GM12878 (cell line): ENCODE measurements at regions of chr16 and their contacts with region 1.

Region 1: GRCh38 chr16:70402916-70403659 is 35.8 kb downstream of the ST3GAL2 start:
- DNase-seq: no peak
- ATAC-seq: no peak
- H3K4me3 ChIP-seq: no peak overlapping the region
- H3K27ac ChIP-seq: peak overlapping the region; percentile 84
- H3K4me1 ChIP-seq: peaks cover 43% of the 10 kb centered on the region
- H3K27me3 ChIP-seq: no peaks in the 10 kb centered on the region; a peak in 1 of 4 replicates
- CTCF ChIP-seq: no peak
- EP300 ChIP-seq: no peak
- POLR2A ChIP-seq: no peak
- RAD21 ChIP-seq: no peak

Region 2: GRCh38 chr16:70416748-70417616 is 13.9 kb after region 1 on chr16:
- CTCF ChIA-PET with region 1: interaction called, 8 read pairs
- POLR2A ChIA-PET with region 1: interaction called, 18 read pairs
- RAD21 ChIA-PET with region 1: interaction called, 23 read pairs
- SMC1A ChIA-PET with region 1: interaction called, 39 read pairs
- in situ Hi-C with region 1: no loop called
- intact Hi-C with region 1: no loop called
- DNase-seq: no peak
- ATAC-seq: peak; percentile 95
- H3K4me3 ChIP-seq: no peak overlapping the region
- H3K27ac ChIP-seq: peak overlapping the region; percentile 87
- H3K4me1 ChIP-seq: peaks cover 50% of the 10 kb centered on the region
- H3K27me3 ChIP-seq: no peaks in the 10 kb centered on the region
- CTCF ChIP-seq: no peak
- EP300 ChIP-seq: peak; percentile 60 to 69; a peak in 2 of 4 replicates
- POLR2A ChIP-seq: 0 out of 2 replicates have a peak, but pooled peaks have one; percentile 20
- RAD21 ChIP-seq: no peak

Region 3: GRCh38 chr16:70433458-70434103 is 30.5 kb after region 1 on chr16:
- CTCF ChIA-PET with region 1: interaction called, 10 read pairs
- POLR2A ChIA-PET with region 1: interaction called, 47 read pairs
- RAD21 ChIA-PET with region 1: interaction called, 38 read pairs
- SMC1A ChIA-PET with region 1: interaction called, 37 read pairs
- in situ Hi-C with region 1: no loop called
- intact Hi-C with region 1: loop called (anchors 1 kb)
- DNase-seq: no peak
- ATAC-seq: no peak
- H3K4me3 ChIP-seq: peak overlapping the region; percentile 70
- H3K27ac ChIP-seq: peak overlapping the region; percentile 88
- H3K4me1 ChIP-seq: peaks cover 57% of the 10 kb centered on the region
- H3K27me3 ChIP-seq: no peaks in the 10 kb centered on the region
- CTCF ChIP-seq: no peak
- EP300 ChIP-seq: no peak
- POLR2A ChIP-seq: no peak
- RAD21 ChIP-seq: no peak